Kidney (tissue), 22 donors: ENCODE measurements at regions of chr1 and their contacts with region 1.

Region 1: GRCh38 chr1:147177611-147178380 is 5.5 kb upstream of the PRKAB2 start:
- DNase-seq: peak; percentile 33 to 80 (median 44)
- H3K4me3 ChIP-seq: no peak overlapping the region
- H3K27ac ChIP-seq: no peak overlapping the region
- H3K4me1 ChIP-seq: peaks cover 0 to 3% (median 2%) of the 10 kb centered on the region in 3 donors
- H3K27me3 ChIP-seq: no peaks in the 10 kb centered on the region
- CTCF ChIP-seq: no peak

Region 2: DNA sequence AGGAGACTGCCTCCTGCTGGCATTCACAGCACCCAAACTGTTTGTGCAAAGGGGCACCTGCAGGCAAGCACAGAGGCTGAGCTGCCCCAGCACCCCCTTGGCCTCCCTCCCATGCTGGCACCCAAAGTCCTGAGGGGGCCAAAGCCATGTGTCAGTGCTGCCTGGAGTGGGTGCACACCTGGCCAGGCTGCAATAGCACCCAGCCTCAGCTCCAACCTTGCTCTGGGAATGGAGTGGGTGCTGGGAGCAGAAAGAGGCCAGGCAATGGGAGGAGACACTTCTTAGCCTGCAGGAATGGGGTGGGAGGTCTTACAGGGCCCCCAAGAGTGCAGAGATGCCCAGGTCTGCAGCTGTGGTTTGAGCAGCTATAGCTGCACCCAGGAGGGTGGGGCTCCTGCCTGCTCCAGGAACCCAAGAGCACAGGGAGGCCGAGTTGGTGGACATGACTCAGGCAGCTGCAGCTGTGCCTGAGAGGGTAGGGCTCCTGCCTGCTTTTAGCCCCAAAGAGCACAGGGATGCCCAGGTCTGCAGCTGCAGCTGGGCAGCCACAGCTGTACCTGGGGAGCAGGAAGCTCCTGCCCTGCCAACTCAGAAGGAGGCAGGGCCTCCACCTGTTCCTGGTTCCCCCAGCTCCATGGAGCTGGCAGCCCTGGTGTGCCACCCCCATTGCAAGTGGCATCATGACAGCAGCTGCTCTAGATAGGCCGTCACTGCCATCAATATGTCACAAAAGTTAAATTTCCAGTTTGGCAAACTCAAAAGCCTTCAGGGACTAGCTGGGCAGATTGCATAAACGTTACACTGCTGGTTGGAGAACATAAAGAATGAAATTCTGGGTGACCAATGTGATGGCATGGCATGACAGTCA is 59.4 kb after region 1 on chr1:
- intact Hi-C with region 1: loop called (anchors 5 kb)
- DNase-seq: no peak
- H3K4me3 ChIP-seq: no peak overlapping the region
- H3K27ac ChIP-seq: no peak overlapping the region
- H3K4me1 ChIP-seq: peaks cover 0 to 10% (median 5%) of the 10 kb centered on the region in 3 donors
- H3K27me3 ChIP-seq: no peaks in the 10 kb centered on the region
- CTCF ChIP-seq: no peak